CD8-positive, alpha-beta T cell (primary cell): ENCODE measurements at regions of chr6 and their contacts with region 1.

Region 1: DNA sequence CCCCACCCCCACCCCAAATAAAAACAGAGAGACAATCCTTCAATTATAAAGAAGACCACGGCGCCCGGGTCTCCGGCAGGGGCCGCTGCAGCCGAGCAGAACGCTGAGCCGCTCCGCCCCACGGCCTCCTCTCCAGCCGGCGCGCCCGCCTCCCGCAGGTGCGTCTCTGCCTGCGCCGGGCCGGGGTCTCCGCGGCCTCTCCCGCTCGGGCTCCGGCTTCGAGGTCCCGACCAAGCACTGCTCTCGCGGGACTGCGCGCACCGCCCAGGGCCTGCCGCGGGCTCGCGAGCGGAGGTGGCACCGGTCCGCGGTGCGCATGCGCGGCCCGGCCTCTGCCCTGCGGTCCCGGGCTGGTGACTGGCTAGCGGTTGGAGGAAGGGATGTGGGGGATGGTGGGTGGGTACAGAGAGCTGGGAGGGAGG is 241 bp upstream of the SIRT5 start:
- DNase-seq: peak; percentile 84 to 98 (median 94)
- ATAC-seq: peak; percentile 84
- H3K4me3 ChIP-seq: peak overlapping the region; percentile 93 to 97
- H3K4me3 Mint-ChIP-seq: peak overlapping the region; percentile 97
- H3K27ac ChIP-seq: peak overlapping the region; percentile 80 to 85
- H3K27ac Mint-ChIP-seq: peak overlapping the region; percentile 97
- H3K4me1 ChIP-seq: peaks cover 4% of the 10 kb centered on the region
- H3K4me1 Mint-ChIP-seq: peaks cover 28% of the 10 kb centered on the region
- H3K27me3 ChIP-seq: no peaks in the 10 kb centered on the region
- H3K27me3 Mint-ChIP-seq: no peaks in the 10 kb centered on the region
- CTCF ChIP-seq: peak; percentile 56

Region 2: GRCh38 chr6:13454286-13455221 is 119.6 kb before region 1 on chr6:
- CTCF ChIA-PET with region 1: interaction called, 7 read pairs
- POLR2A ChIA-PET with region 1: interaction called, 4 read pairs
- intact Hi-C with region 1: loop called in 1 of 2 experiments (anchors 2 kb)
- DNase-seq: peak; percentile 31 to 92 (median 70)
- ATAC-seq: peak; percentile 80
- H3K4me3 ChIP-seq: peak overlapping the region; percentile 10 to 26
- H3K4me3 Mint-ChIP-seq: peak overlapping the region; percentile 62
- H3K27ac ChIP-seq: peak overlapping the region; percentile 18 to 77
- H3K27ac Mint-ChIP-seq: peak overlapping the region; percentile 90
- H3K4me1 ChIP-seq: peaks cover 31% of the 10 kb centered on the region
- H3K4me1 Mint-ChIP-seq: peaks cover 36% of the 10 kb centered on the region
- H3K27me3 ChIP-seq: no peaks in the 10 kb centered on the region
- H3K27me3 Mint-ChIP-seq: no peaks in the 10 kb centered on the region
- CTCF ChIP-seq: peak; percentile 25

Region 3: GRCh38 chr6:13561624-13562267 is 12.4 kb before region 1 on chr6:
- CTCF ChIA-PET with region 1: interaction called, 14 read pairs
- POLR2A ChIA-PET with region 1: interaction called, 4 read pairs
- intact Hi-C with region 1: no loop called
- DNase-seq: no peak
- ATAC-seq: no peak
- H3K4me3 ChIP-seq: no peak overlapping the region
- H3K4me3 Mint-ChIP-seq: no peak overlapping the region
- H3K27ac ChIP-seq: no peak overlapping the region
- H3K27ac Mint-ChIP-seq: no peak overlapping the region
- H3K4me1 ChIP-seq: no peaks in the 10 kb centered on the region
- H3K4me1 Mint-ChIP-seq: no peaks in the 10 kb centered on the region
- H3K27me3 ChIP-seq: no peaks in the 10 kb centered on the region
- H3K27me3 Mint-ChIP-seq: peaks cover 15% of the 10 kb centered on the region
- CTCF ChIP-seq: no peak

Region 4: GRCh38 chr6:13711733-13712598 is 137.8 kb after region 1 on chr6 and contains the start of gene RANBP9:
- CTCF ChIA-PET with region 1: interaction called, 3 read pairs
- POLR2A ChIA-PET with region 1: interaction called, 7 read pairs
- intact Hi-C with region 1: loop called in 1 of 2 experiments (anchors 1 kb)
- DNase-seq: peak; percentile 76 to 94 (median 86)
- ATAC-seq: peak; percentile 82
- H3K4me3 ChIP-seq: peak within 1 kb of the TSS; percentile 77 to 81
- H3K4me3 Mint-ChIP-seq: peak within 1 kb of the TSS; percentile 93
- H3K27ac ChIP-seq: peak within 1 kb of the TSS; percentile 77 to 83
- H3K27ac Mint-ChIP-seq: peak within 1 kb of the TSS; percentile 97
- H3K4me1 ChIP-seq: peaks cover 22% of the 10 kb centered on the region
- H3K4me1 Mint-ChIP-seq: peaks cover 43% of the 10 kb centered on the region
- H3K27me3 ChIP-seq: no peaks in the 10 kb centered on the region
- H3K27me3 Mint-ChIP-seq: no peaks in the 10 kb centered on the region
- CTCF ChIP-seq: no peak
- total RNA-seq, gene RANBP9: 79.1 to 81.9 TPM

Region 5: GRCh38 chr6:13814176-13814937 is 240.2 kb after region 1 on chr6 and contains the start of gene MCUR1:
- CTCF ChIA-PET with region 1: no interaction called
- POLR2A ChIA-PET with region 1: interaction called, 7 read pairs
- intact Hi-C with region 1: loop called (anchors 1 to 2 kb)
- DNase-seq: peak; percentile 51 to 92 (median 74)
- ATAC-seq: peak; percentile 80
- H3K4me3 ChIP-seq: peak within 1 kb of the TSS; percentile 71
- H3K4me3 Mint-ChIP-seq: peak within 1 kb of the TSS; percentile 87
- H3K27ac ChIP-seq: peak within 1 kb of the TSS; percentile 61 to 76
- H3K27ac Mint-ChIP-seq: peak within 1 kb of the TSS; percentile 85
- H3K4me1 ChIP-seq: peaks cover 14% of the 10 kb centered on the region
- H3K4me1 Mint-ChIP-seq: peaks cover 34% of the 10 kb centered on the region
- H3K27me3 ChIP-seq: no peaks in the 10 kb centered on the region
- H3K27me3 Mint-ChIP-seq: no peaks in the 10 kb centered on the region
- CTCF ChIP-seq: no peak
- total RNA-seq, gene MCUR1: 2.1 to 3.4 TPM